ENCODE measurements at regions of chr10 and their contacts with region 1.

Region 1: GRCh38 chr10:103966671-103967447 is at the start of gene SLK:
- DNase-seq: peak; percentile 81
- H3K4me3 Mint-ChIP-seq: peak within 1 kb of the TSS; percentile 97
- H3K27ac Mint-ChIP-seq: peak within 1 kb of the TSS; percentile 90
- H3K4me1 Mint-ChIP-seq: peaks cover 38% of the 10 kb centered on the region
- H3K27me3 Mint-ChIP-seq: no peaks in the 10 kb centered on the region
- total RNA-seq, gene SLK: 25.0 and 27.1 TPM in 2 replicates

Region 2: GRCh38 chr10:103470761-103471653 is 495.9 kb before region 1 on chr10:
- intact Hi-C with region 1: no loop called
- DNase-seq: peak; percentile 69
- H3K4me3 Mint-ChIP-seq: peak overlapping the region; percentile 27
- H3K27ac Mint-ChIP-seq: peak overlapping the region; percentile 89
- H3K4me1 Mint-ChIP-seq: peaks cover 71% of the 10 kb centered on the region
- H3K27me3 Mint-ChIP-seq: no peaks in the 10 kb centered on the region

Region 3: GRCh38 chr10:103504181-103504783 is 462.6 kb before region 1 on chr10:
- intact Hi-C with region 1: no loop called
- DNase-seq: peak; percentile 56
- H3K4me3 Mint-ChIP-seq: peak overlapping the region; percentile 40
- H3K27ac Mint-ChIP-seq: peak overlapping the region; percentile 77
- H3K4me1 Mint-ChIP-seq: peaks cover 53% of the 10 kb centered on the region
- H3K27me3 Mint-ChIP-seq: peaks cover 36% of the 10 kb centered on the region

Region 4: DNA sequence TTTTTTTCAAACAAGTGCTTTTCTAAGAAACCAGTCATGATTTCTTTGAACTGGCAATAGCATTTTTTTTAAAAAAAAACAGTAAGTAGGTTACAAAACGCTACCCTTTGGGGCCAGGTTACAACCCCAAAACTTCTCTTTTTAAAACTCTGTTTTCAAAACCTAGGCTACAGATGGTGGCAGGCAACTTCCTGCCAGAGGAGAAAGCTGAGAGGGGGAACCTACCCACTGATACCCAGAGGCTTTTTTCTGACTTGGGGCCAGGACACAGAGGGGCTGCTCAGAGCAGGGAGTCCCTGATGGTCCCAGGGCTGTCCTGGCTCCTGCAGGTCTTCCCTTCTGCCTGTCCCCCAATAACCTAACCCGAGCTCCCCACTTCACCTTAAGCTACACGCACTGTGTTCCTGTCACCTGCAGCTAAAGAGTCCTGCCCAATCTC is 55.8 kb before region 1 on chr10:
- intact Hi-C with region 1: loop called (anchors 2 kb)
- DNase-seq: peak; percentile 54
- H3K4me3 Mint-ChIP-seq: peak overlapping the region; percentile 68
- H3K27ac Mint-ChIP-seq: peak overlapping the region; percentile 90
- H3K4me1 Mint-ChIP-seq: peaks cover 72% of the 10 kb centered on the region
- H3K27me3 Mint-ChIP-seq: no peaks in the 10 kb centered on the region

Region 5: DNA sequence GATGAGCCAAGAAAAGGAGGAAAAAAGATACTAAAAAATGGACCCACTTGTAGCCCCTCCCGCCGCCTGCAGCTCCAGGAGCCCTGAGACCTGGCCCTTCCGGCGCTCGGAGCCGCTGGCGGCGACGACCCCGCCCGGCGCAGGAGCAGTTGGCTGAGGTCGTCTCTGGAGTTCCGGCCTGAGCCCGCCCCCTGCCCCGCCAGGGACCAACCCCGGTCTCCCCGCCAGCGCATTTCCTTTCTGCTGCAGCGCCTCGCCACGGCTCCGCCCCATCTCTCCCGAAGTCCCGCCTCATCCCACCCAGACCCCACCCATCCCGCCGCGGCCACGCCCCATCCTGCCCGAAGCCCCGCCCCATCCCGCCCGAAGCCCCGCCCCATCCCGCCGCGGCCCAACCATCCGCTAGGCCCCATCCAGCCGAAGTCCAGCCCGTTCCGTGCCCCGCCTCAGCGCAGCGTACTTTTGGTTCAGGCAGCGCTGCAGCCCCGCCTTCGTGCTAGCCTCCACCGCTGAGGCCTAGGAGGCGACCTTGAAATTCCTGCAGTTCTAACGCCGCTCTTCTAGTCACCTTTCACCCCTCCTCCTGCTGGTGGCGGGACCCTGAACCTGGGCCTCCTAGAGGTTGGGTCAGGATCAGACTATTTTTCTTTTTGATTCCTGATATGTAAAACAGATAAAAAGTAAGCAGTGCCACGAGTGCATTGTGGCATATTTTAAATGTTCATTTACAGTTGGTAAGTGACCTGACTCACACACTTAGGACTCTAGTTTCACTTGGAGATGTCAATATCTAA is 48.6 kb before region 1 on chr10 and contains the start of gene STN1:
- intact Hi-C with region 1: loop called (anchors 1 kb)
- DNase-seq: peak; percentile 94
- H3K4me3 Mint-ChIP-seq: peak within 1 kb of the TSS; percentile 93
- H3K27ac Mint-ChIP-seq: peak within 1 kb of the TSS; percentile 94
- H3K4me1 Mint-ChIP-seq: peaks cover 36% of the 10 kb centered on the region
- H3K27me3 Mint-ChIP-seq: no peaks in the 10 kb centered on the region
- total RNA-seq, gene STN1: 19.4 and 20.0 TPM in 2 replicates

Region 6: DNA sequence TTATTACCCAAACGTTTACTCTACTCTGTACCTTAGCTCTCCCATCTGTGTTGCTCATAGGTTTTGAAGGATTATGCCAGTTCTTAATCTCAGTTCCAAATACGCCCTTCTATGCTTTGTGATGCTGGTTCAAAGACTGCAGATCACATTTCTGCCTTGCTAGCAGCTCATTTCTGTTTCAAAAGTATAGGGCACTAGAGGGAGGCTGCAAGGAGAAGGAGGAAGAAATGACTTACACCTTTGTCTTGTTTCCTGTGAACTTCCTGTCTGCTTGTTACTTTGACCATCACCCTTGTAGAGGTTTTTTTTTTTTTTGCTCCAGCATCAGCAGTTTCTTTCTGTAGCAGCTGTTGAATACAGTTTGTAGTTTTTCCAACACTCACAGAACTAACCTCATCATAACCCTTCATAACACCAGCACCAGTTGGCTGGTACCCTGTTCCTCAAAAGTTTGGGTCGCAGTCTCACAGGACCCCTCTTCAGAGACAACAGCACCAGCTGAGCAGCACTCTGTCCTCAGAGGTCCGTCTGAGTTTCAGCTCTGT is 16.6 kb after region 1 on chr10:
- intact Hi-C with region 1: loop called (anchors 1 kb)
- DNase-seq: peak; percentile 16
- H3K4me3 Mint-ChIP-seq: peak overlapping the region; percentile 20
- H3K27ac Mint-ChIP-seq: peak overlapping the region; percentile 67
- H3K4me1 Mint-ChIP-seq: peaks cover 62% of the 10 kb centered on the region
- H3K27me3 Mint-ChIP-seq: no peaks in the 10 kb centered on the region

Region 7: GRCh38 chr10:104231784-104232612 is 265.1 kb after region 1 on chr10 and contains the start of gene CFAP43:
- intact Hi-C with region 1: loop called (anchors 2 kb)
- DNase-seq: peak; percentile 99
- H3K4me3 Mint-ChIP-seq: peak within 1 kb of the TSS; percentile 82
- H3K27ac Mint-ChIP-seq: peak within 1 kb of the TSS; percentile 63
- H3K4me1 Mint-ChIP-seq: peaks cover 12% of the 10 kb centered on the region
- H3K27me3 Mint-ChIP-seq: peaks cover 33% of the 10 kb centered on the region
- total RNA-seq, gene CFAP43: not detected in 2 replicates

Region 8: GRCh38 chr10:104254493-104255310 is 287.8 kb after region 1 on chr10 and contains the start of gene GSTO1:
- intact Hi-C with region 1: loop called (anchors 5 kb)
- DNase-seq: peak; percentile 39
- H3K4me3 Mint-ChIP-seq: peak within 1 kb of the TSS; percentile 96
- H3K27ac Mint-ChIP-seq: peak within 1 kb of the TSS; percentile 96
- H3K4me1 Mint-ChIP-seq: peaks cover 52% of the 10 kb centered on the region
- H3K27me3 Mint-ChIP-seq: peaks cover 6% of the 10 kb centered on the region
- total RNA-seq, gene GSTO1: 125 TPM in 2 replicates

Region 9: DNA sequence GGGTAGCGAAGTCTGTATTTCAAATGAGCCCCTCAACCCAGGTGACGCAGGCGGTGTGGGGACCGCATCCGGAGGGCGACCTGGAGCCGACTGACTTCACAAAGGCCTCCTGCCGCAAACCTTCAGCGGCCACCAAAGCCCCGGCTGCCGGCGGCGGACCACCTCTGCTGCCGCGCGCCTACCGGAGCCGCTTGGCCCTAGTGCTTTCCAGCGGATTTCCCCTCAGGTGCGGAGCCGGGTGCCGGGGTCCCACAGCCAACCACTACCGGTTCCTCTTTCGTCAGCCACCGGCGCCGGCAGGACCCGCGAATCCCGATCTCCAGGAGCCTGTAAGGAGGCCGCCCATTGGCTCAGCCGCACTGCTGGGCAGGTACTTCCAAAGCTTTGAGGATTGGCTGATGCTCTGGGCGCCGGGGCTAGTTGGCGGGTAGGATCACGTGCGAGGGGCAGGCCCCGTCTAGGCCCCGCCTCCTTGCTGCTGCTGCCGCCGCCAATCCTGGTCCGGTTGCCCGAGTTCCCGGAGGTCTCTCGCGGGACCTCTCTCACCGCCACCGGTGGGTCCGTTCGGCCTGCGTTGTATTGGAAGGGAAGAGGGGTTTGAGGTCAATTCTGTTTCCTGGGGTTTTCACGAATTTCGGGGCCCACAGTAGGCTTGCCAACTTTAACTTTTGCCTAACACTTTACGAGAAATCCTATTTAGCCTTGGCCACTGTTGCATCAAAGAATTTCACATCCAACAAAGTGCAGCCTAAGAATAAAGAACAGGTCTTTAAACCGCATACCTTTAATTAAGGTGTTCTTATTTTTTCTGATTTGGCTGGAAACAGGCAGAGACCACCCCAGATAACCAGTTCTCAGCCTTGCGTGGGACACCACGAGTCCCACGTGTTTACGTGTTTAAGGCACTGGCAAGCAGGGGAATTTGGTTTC is 302.1 kb after region 1 on chr10 and contains the start of gene GSTO2:
- intact Hi-C with region 1: no loop called
- DNase-seq: peak; percentile 98
- H3K4me3 Mint-ChIP-seq: peak within 1 kb of the TSS; percentile 92
- H3K27ac Mint-ChIP-seq: peak within 1 kb of the TSS; percentile 96
- H3K4me1 Mint-ChIP-seq: peaks cover 45% of the 10 kb centered on the region
- H3K27me3 Mint-ChIP-seq: peaks cover 4% of the 10 kb centered on the region
- total RNA-seq, gene GSTO2: 1.1 and 1.2 TPM in 2 replicates